A673 (cell line): ENCODE measurements at regions of chr13 and their contacts with region 1.

Region 1: GRCh38 chr13:76903544-76904162 is 17.4 kb upstream of the KCTD12 start:
- DNase-seq: peak; percentile 78
- H3K4me3 ChIP-seq: no peak overlapping the region
- H3K27ac ChIP-seq: no peak overlapping the region
- H3K4me1 ChIP-seq: no peaks in the 10 kb centered on the region
- H3K27me3 ChIP-seq: peaks cover 53% of the 10 kb centered on the region
- CTCF ChIP-seq: peak; percentile 98

Region 2: DNA sequence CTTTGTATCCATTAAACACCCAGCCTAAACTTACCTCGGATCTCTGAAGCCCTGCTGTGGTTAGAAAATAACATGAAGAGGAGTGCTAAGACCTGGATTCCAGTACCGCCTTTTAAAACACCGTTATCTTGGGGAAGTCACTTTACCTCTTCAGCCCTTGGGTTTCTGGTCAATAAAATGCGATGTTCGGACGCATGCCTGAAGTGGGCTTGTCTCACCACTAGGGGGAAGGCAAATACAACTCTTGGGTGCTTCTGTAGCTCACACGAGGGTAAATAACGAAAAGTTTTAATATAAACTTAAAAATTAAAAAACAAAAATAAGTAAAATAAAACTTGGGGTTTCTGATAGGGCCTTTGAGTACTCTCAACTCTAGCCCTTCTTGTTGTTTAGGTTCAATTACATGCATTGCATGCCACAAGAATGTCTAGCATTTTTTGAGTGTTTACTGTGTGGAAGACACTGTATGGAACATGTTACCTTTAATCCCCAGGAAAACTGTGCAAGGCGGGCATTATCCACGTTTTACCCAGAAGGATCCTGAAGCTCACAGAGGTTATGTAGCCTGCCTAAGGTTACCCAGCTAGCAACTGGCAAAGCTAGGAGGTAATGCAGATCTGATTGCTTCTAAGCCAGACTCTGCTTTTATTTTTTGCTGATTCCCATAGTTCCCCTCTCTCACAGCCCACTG is 1027.1 kb before region 1 on chr13:
- CTCF ChIA-PET with region 1: no interaction called
- POLR2A ChIA-PET with region 1: no interaction called
- intact Hi-C with region 1: loop called (anchors 2 kb)
- DNase-seq: peak; percentile 67
- H3K4me3 ChIP-seq: no peak overlapping the region
- H3K27ac ChIP-seq: no peak overlapping the region
- H3K4me1 ChIP-seq: no peaks in the 10 kb centered on the region
- H3K27me3 ChIP-seq: peaks cover 10% of the 10 kb centered on the region
- CTCF ChIP-seq: peak; percentile 93

Region 3: GRCh38 chr13:76473552-76474134 is 430.0 kb before region 1 on chr13:
- CTCF ChIA-PET with region 1: no interaction called
- POLR2A ChIA-PET with region 1: no interaction called
- intact Hi-C with region 1: loop called (anchors 5 kb)
- DNase-seq: peak; percentile 82
- H3K4me3 ChIP-seq: no peak overlapping the region
- H3K27ac ChIP-seq: no peak overlapping the region
- H3K4me1 ChIP-seq: no peaks in the 10 kb centered on the region
- H3K27me3 ChIP-seq: peaks cover 14% of the 10 kb centered on the region
- CTCF ChIP-seq: peak; percentile 78

Region 4: GRCh38 chr13:76822698-76823267 is 80.9 kb before region 1 on chr13:
- CTCF ChIA-PET with region 1: interaction called, 4 read pairs
- POLR2A ChIA-PET with region 1: no interaction called
- intact Hi-C with region 1: loop called (anchors 5 kb)
- DNase-seq: peak; percentile 38
- H3K4me3 ChIP-seq: no peak overlapping the region
- H3K27ac ChIP-seq: no peak overlapping the region
- H3K4me1 ChIP-seq: no peaks in the 10 kb centered on the region
- H3K27me3 ChIP-seq: no peaks in the 10 kb centered on the region
- CTCF ChIP-seq: peak; percentile 29; the same call in 1 of the 2 replicates

Region 5: DNA sequence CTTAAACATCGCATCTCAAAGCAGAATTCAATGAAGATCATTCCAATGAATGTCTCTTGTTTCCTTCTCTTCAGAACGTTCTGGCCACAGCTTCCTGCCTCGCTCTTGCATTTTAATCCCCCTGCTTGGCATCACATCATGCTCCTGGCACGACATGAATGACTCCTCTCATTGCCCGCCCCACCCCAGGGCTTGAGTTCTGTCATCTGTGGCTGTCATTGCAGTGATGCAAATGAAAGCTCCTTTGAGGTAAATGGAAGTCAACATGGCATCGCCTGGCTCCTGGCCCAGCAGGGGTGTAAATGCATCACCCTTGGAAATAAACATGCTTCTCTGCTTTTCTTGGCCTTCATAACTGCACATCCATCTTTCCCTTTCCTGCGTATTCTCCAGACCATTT is 680.5 kb after region 1 on chr13:
- CTCF ChIA-PET with region 1: no interaction called
- POLR2A ChIA-PET with region 1: no interaction called
- intact Hi-C with region 1: no loop called
- DNase-seq: peak; percentile 94
- H3K4me3 ChIP-seq: no peak overlapping the region
- H3K27ac ChIP-seq: peak overlapping the region; percentile 87
- H3K4me1 ChIP-seq: peaks cover 48% of the 10 kb centered on the region
- H3K27me3 ChIP-seq: no peaks in the 10 kb centered on the region
- CTCF ChIP-seq: no peak